Activated B cell treated with CpG ODN at 0.5 μM for 24 hours (primary cell): ENCODE measurements at regions of chr9 and their contacts with region 1.

Region 1: GRCh38 chr9:21789541-21790037 is 12.8 kb upstream of the MTAP start:
- DNase-seq: no peak
- ATAC-seq: peak; percentile 98
- H3K4me3 Mint-ChIP-seq: peak overlapping the region; percentile 80
- H3K27ac Mint-ChIP-seq: peak overlapping the region; percentile 76
- H3K4me1 Mint-ChIP-seq: peaks cover 7% of the 10 kb centered on the region
- H3K27me3 Mint-ChIP-seq: peaks cover 17% of the 10 kb centered on the region
- CTCF ChIP-seq: peak; percentile 85

Region 2: DNA sequence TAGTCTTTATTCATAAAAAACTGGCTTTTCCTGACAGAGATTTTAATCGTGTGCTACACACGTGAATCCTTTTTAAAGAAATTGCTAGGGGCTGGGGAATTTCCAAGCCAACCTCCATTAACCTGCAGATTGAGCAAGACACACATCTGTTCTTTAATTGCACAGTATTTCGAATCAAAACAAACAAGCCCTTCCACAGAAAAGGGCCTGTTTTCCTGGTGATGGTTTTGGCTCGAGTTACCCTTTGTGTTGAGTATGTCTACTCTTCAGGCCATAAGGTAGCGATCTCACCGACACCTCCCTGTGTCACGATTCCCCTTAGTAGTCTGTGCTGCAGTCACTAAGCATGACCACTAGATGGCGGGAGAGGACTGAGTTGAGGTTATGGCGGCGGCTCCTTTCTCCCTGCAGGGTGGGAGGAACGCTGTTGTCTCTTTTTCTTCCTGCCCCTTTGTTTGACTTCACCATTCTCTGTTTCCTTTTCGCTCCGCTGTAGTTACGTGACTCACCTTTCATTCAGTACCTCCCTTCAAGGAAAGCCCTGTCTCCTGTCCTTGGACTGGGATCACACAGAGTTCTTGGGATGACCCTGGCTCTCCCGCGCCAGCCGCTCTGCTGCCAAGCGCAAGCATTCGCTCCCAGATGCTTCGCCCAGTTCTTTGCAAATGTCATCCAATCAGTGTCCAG is 1863.6 kb before region 1 on chr9:
- CTCF ChIA-PET with region 1: no interaction called
- POLR2A ChIA-PET with region 1: no interaction called
- intact Hi-C with region 1: loop called (anchors 5 kb)
- DNase-seq: peak; percentile 37
- ATAC-seq: peak; percentile 99
- H3K4me3 Mint-ChIP-seq: peak overlapping the region; percentile 49
- H3K27ac Mint-ChIP-seq: no peak overlapping the region
- H3K4me1 Mint-ChIP-seq: peaks cover 11% of the 10 kb centered on the region
- H3K27me3 Mint-ChIP-seq: peaks cover 19% of the 10 kb centered on the region
- CTCF ChIP-seq: no peak

Region 3: DNA sequence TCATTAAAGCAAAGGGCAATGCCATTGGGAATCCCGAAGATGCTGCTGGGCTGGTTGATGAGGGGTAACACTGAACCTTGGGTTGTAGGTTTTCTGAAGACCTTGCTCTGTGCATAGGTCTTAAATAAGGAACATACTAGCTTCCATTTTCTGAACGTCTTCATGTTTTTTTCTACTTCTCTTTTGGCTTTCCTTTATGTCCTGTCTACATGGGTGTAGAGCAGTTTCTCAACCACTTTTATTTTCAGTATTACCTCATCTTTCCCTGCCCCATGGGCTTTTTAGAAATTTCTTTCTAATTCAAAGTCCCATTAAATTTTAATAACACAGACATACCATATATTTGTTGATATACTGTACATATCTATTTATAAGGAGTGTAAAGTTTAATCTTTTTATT is 549.7 kb before region 1 on chr9 and contains the start of gene IFNA14:
- CTCF ChIA-PET with region 1: interaction called, 5 read pairs
- POLR2A ChIA-PET with region 1: no interaction called
- intact Hi-C with region 1: loop called (anchors 1 kb)
- DNase-seq: no peak
- ATAC-seq: no peak
- H3K4me3 Mint-ChIP-seq: no peak within 1 kb of the TSS
- H3K27ac Mint-ChIP-seq: no peak within 1 kb of the TSS
- H3K4me1 Mint-ChIP-seq: peaks cover 6% of the 10 kb centered on the region
- H3K27me3 Mint-ChIP-seq: peaks cover 6% of the 10 kb centered on the region
- CTCF ChIP-seq: no peak
- total RNA-seq, gene IFNA14: not detected in 2 replicates

Region 4: DNA sequence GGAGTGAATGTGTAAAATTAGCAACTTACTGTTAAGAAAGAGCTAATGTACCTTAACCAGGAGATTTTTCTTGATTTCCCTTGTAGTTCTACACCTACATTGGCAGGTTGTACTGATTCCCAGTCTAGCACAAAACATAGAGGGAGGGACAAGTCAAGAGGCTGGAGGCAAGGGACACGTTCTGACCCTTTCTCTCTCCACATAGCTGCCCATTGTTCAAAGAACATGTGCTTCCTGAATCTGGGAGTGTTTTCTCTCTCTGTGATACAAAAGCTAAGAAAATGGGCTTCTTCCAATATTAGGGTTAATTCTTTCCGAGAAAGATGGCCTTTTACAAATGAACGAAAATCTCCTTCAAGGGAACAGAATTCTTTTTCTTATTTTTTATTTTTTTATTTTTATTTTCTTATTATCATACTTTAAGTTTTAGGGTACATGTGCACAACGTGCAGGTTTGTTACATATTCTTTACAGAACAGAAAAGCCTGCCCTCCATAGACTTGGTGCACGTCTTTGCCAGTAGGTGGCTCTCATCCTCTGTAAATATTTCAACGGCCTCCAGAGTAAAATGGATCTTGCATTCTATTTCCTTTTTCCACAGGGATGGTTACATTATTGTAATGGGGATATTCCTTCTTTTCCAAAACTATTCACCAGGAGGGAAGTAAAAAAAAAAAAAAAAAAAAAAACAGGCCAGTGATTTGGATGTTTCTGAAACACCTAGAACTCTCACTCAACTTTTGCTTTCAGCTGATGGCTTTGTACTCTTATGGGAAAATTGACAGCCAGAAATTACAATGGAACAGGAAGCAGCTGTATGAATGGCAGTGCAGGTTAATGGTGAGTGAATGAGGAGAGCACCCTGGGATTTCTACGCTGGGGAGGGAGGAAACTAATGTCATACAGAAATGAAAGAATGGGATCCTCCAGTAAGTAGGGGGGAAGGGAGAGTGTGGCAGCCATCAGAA is 471.3 kb before region 1 on chr9:
- CTCF ChIA-PET with region 1: interaction called, 9 read pairs
- POLR2A ChIA-PET with region 1: no interaction called
- intact Hi-C with region 1: loop called (anchors 1 kb)
- DNase-seq: no peak
- ATAC-seq: peak; percentile 65
- H3K4me3 Mint-ChIP-seq: no peak overlapping the region
- H3K27ac Mint-ChIP-seq: no peak overlapping the region
- H3K4me1 Mint-ChIP-seq: peaks cover 3% of the 10 kb centered on the region
- H3K27me3 Mint-ChIP-seq: no peaks in the 10 kb centered on the region
- CTCF ChIP-seq: no peak

Region 5: GRCh38 chr9:21465859-21466518 is 323.6 kb before region 1 on chr9:
- CTCF ChIA-PET with region 1: interaction called, 4 read pairs
- POLR2A ChIA-PET with region 1: no interaction called
- intact Hi-C with region 1: loop called (anchors 1 kb)
- DNase-seq: no peak
- ATAC-seq: no peak
- H3K4me3 Mint-ChIP-seq: no peak overlapping the region
- H3K27ac Mint-ChIP-seq: no peak overlapping the region
- H3K4me1 Mint-ChIP-seq: no peaks in the 10 kb centered on the region
- H3K27me3 Mint-ChIP-seq: peaks cover 14% of the 10 kb centered on the region
- CTCF ChIP-seq: no peak

Region 6: DNA sequence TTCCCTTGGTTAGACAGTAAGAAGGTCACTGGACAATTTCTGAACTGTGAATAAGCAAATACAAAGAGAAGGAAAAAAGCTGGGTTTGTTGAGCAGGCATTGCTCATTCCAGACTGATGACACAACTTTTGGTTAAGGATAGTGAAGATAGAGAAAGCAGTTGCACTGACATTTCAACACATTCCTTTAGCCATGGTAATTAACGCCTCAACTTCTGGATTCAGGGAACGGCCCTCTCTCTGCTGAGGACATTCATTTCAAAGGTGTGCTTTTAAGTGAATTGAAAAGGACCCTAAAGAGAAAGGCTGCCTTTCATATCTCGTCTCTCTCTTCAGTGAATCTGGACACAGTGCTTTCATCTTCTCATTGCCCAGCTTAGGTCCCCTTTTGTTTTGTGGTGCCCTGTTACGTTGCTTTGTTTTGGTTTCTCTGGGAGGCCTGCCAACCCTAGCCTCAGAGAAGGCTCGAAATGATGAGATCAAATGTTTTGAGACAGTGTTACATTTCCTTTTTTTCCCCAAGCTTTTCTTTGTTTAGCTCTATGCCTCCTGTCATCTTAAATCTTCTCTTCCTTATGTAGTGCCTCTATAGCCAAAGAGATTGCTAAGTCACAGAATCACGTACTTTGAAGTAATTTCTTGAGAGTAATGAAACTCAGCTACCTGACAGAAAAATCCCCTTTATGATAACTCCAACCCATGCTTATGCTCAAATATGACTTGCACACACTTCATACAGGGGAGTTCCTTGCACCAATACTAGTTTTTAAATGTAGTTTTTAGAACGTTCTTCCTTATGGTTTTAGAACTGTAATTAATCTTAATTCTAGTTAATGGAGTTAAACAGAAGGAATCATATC is 213.0 kb before region 1 on chr9:
- CTCF ChIA-PET with region 1: no interaction called
- POLR2A ChIA-PET with region 1: no interaction called
- intact Hi-C with region 1: no loop called
- DNase-seq: no peak
- ATAC-seq: no peak
- H3K4me3 Mint-ChIP-seq: no peak overlapping the region
- H3K27ac Mint-ChIP-seq: no peak overlapping the region
- H3K4me1 Mint-ChIP-seq: peaks cover 6% of the 10 kb centered on the region
- H3K27me3 Mint-ChIP-seq: peaks cover 3% of the 10 kb centered on the region
- CTCF ChIP-seq: no peak

Region 7: DNA sequence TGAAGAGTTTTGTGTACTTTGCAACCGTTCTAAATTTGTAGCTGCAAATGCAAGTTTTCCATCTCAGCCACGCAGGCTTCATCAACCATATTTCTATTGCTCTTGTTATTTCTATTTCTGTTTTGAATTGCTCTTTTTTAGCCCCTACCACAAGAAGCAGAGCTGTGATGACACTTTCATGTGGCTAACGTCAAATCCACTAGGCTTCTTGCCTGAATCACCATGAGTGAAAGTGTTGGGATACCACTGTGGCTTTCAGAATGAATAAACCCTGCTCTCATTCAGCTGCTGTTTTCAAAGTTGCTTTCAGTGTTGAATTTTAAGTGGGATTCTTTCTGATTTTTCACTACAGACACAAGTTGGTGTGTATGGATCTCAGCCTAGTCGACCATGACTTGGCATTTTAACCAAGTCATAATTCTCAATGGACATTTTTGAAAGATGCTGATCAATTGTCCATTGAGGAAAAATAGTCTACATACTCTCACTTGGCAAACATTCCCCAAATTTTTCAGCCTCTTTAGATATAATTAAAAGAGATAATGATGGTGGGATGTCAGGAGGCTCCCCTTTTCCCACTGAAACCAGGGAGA is 28.2 kb before region 1 on chr9:
- CTCF ChIA-PET with region 1: no interaction called
- POLR2A ChIA-PET with region 1: no interaction called
- intact Hi-C with region 1: no loop called
- DNase-seq: no peak
- ATAC-seq: no peak
- H3K4me3 Mint-ChIP-seq: no peak overlapping the region
- H3K27ac Mint-ChIP-seq: no peak overlapping the region
- H3K4me1 Mint-ChIP-seq: no peaks in the 10 kb centered on the region
- H3K27me3 Mint-ChIP-seq: peaks cover 21% of the 10 kb centered on the region
- CTCF ChIP-seq: no peak

Region 8: DNA sequence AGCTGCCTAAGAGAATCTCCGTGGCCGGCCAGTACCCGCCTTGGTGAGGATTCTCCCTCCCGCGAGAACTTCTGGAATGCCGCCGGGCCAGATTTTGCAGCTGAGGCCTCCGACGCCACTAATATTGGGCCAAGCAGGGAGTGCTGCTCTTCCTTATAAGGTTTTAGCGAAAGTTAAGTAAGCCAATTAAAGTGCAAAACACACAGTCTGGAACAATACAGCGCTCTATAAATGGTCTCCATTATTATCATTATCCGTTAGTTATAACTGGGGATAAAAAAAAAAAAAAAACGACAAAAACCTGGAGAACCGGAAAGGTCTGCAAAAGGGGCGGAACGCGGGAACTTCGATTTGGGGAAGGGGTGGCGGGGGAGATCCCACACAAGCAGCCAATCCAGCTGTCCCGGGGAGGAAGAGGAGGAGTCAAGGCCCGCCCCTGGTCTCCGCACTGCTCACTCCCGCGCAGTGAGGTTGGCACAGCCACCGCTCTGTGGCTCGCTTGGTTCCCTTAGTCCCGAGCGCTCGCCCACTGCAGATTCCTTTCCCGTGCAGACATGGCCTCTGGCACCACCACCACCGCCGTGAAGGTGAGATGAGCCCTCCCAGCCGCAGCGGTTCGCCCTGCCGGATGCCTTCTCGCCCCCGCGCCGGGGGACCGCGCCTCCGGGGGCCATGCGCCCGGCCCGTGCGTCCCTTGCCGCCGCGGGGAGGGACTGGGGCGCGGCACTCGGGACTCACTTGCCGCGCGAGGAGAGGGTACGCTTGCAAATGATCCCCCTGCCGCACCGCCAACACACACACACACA is 12.8 kb after region 1 on chr9 and contains the start of gene MTAP:
- CTCF ChIA-PET with region 1: interaction called, 4 read pairs
- POLR2A ChIA-PET with region 1: no interaction called
- intact Hi-C with region 1: loop called (anchors 1 kb)
- DNase-seq: peak; percentile 68
- ATAC-seq: peak; percentile 88
- H3K4me3 Mint-ChIP-seq: peak within 1 kb of the TSS; percentile 99
- H3K27ac Mint-ChIP-seq: peak within 1 kb of the TSS; percentile 91
- H3K4me1 Mint-ChIP-seq: peaks cover 53% of the 10 kb centered on the region
- H3K27me3 Mint-ChIP-seq: peaks cover 15% of the 10 kb centered on the region
- CTCF ChIP-seq: no peak
- total RNA-seq, gene MTAP: 30.4 and 43.2 TPM in 2 replicates